ENCODE measurements at regions of chr2 and their contacts with region 1.

Region 1: DNA sequence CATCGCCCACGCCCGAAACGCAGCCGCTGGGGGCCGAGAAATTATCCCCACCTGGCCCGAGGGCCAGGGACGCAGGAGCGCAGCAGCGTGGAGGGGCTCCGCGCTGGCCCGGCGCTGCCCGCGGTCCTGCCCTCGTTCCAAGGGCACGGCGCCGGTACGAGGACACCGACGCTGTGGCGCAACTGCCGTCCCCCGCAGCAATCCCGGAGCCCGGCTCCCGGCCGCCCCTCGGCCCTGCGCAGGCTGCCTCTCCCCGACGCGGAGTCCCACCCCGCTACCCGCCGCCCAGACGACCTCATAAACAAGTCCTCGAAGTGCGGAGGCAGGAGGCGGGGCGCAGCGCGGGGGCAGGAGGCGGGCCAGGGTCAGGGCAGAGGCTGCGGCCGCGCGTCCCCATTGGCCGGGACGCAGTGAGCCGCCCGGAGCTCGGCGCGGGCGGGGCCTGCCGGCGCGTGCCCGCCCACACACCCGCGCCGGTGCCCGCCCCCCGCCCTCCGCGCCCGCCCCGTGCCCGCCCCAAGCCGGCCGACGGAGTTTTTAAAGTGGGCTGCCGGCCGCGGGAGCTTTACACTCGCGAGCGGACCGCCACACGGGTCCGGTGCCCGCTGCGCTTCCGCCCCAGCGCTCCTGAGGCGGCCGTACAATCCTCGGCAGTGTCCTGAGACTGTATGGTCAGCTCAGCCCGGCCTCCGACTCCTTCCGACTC is at the start of gene EPAS1:
- DNase-seq: peak; percentile 97
- ATAC-seq: peak; percentile 87
- total RNA-seq, gene EPAS1: 262 to 377 TPM

Region 2: DNA sequence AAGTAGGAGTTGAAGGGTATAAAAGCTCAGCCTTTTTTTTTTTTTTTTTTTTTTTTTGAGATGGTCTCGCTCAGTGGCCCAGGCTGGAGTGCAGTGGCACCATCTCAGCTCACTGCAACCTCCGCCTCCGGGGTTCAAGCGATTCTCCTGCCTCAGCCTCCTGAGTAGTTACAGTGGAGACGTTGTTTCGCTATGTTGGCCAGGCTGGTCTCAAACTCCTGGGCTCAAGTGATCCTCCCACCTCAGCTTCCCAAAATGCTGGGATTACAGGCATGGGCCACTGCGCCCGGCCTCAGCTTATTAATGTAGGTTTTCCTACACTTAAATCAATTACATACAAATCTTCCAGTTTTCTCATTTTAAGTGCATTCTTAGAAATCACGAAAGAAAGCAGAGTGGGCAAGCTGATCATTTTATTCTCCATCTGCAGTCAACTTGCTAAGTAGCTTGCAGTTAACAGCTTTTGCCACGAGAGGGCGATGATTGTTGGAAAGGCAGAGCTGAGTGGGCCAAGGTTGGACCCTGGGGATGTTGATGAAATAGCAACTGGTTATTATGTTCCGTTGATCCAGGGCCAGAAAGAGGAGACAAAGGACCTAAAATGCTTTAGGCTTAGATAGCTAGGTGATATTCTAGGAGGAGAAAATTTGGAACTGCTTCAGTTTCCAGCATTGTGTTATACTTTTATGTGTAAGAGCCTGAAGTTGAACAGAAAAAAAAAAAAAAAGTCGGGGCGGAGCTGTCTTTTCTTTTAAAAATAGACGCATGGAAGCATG is 234.2 kb before region 1 on chr2:
- intact Hi-C with region 1: loop called in 1 of 2 experiments (anchors 5 kb)
- DNase-seq: peak; percentile 89
- ATAC-seq: peak; percentile 81 to 86

Region 3: GRCh38 chr2:46073540-46074018 is 223.4 kb before region 1 on chr2:
- intact Hi-C with region 1: loop called in 1 of 2 experiments (anchors 10 kb)
- DNase-seq: no peak
- ATAC-seq: peak; percentile 27 to 61

Region 4: DNA sequence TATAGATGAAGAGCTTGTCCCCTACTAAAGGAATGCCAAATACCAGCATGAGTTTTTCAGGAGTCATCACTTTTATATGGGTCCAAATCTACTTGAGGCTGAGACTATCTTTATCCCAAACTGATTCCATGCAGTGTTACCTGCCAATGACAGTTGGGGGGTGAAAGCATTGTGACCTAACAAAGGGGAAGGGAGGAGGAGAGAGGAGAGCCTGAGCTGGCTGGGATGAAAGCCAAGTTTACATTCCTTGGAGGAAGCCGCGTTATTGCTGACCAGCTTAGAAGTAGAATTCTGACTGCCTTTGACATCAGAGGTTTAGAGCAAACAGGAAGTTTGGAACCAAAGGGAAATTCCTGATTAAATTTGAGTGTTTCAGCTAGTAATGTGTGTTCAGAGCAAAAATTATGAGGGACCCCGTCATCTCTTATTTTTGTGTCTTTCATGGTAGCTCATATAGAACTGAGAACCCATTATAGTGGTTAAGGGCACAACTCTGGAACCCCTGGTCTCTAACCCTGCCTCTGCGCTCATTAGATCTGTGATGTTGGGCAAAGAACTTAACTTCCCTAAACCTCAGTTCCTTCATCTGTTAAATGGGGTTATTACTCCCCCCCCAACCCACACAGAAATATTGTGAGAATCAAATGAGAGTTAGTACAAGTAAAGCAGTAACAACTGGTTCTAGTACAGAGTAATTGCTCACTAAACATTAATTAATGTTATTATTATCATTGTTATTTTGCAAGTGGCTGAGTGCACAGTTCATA is 199.1 kb before region 1 on chr2:
- intact Hi-C with region 1: loop called in 1 of 2 experiments (anchors 10 kb)
- DNase-seq: peak; percentile 62
- ATAC-seq: peak; percentile 91 to 94

Region 5: DNA sequence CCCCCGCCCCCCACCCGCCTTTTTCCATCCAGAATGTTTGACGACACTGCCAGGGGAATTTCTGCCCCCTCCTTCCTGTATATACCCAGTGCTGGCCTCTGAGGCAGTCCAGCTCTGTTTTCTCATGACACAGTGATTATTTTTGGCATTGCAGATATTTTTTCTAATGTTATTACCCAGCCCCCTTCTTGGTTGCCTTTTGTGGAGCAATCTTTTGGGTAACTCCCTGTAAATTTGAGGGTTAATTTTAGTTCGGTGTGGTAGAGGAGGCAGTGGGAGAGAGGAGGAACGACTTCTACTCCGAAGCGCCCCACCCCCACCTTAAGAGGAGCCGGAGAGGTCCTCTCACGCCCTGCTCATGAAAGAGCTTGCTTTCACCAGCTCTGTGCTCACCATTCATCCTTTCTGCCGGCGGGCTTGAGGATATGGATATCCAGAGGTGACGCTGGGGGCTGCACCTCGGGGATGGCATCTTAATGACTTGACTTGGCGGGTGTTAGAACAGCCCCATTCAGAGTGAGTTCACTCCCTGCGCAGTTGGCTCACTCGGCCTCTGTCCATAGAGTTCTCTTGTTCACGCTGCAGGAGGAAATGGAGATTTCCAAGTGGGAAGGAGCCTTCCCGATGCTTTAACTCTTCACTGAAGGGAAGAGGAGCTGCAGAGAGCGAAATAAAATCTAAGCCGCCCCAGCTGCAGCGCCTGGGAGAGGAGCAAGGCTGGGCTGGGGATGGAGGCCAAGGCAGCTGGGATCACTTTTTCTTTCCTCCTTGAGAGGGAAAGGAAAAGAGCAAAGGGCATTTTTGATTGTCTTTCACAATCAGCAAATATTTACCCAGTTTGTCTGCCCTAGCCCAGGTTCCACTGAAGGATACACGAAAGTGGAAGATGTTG is 38.6 kb after region 1 on chr2:
- intact Hi-C with region 1: loop called in 1 of 2 experiments (anchors 2 kb)
- DNase-seq: peak; percentile 56
- ATAC-seq: peak; percentile 21 to 25

Region 6: DNA sequence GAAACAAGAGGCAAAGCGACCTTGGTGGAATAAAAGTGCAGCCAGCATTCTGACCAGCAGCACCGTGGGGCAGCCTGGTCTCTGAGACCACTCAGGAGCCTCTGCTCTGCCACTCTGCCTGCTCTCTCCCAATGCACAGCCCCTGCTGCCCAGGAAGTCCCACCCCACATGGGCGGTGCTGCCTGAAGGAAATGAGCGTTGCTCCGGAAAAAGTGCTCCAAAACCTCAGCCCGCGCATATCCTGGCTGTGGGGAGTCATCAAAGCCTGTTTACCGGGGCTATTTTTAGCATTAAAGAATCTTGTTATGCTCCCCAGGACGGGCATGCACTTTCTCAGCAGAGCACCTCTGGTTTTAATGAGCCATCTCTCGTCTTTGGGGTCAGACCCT is 54.8 kb after region 1 on chr2:
- intact Hi-C with region 1: loop called in 1 of 2 experiments (anchors 5 kb)
- DNase-seq: peak; percentile 73
- ATAC-seq: peak; percentile 60 to 71

Region 7: GRCh38 chr2:46364797-46365457 is 67.9 kb after region 1 on chr2:
- intact Hi-C with region 1: loop called (anchors 2 to 10 kb)
- DNase-seq: no peak
- ATAC-seq: peak; percentile 51 to 73

Region 8: DNA sequence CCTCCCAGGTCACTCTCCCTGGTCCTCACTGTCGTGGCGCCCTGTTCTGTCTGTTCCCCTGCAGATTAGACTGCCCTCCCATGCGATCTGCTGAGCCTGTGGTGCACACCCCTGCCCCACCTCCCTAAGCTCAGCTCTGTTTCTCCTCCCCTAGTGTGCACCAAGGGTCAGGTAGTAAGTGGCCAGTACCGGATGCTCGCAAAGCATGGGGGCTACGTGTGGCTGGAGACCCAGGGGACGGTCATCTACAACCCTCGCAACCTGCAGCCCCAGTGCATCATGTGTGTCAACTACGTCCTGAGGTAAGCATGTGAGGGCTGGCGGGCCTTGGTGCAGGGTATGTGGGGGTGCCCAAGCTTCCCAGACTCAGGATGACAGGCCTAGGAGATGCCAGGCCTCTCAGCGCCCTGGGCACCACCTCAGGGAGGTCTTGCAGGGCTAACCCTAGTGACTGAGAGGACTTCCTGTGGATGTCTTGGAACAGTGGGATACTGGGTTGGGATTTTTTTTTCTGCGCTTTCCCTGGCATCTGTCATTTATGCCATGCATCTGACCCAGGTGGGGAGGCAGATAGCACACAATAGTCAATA is 78.6 kb after region 1 on chr2:
- intact Hi-C with region 1: no loop called
- DNase-seq: no peak
- ATAC-seq: no peak

Region 9: GRCh38 chr2:46510598-46511177 is 213.7 kb after region 1 on chr2:
- intact Hi-C with region 1: no loop called
- DNase-seq: no peak
- ATAC-seq: no peak

Measured in left cardiac atrium (tissue), 4 donors.